ENCODE measurements at regions of chr10 and their contacts with region 1.

Region 1: GRCh38 chr10:100229819-100230422 is 525 bp upstream of the CHUK start:
- DNase-seq: peak in 1 of 9 experiments; percentile 9
- ATAC-seq: no peak
- H3K4me3 ChIP-seq: peak overlapping the region; percentile 66 to 99
- H3K4me3 Mint-ChIP-seq: peak overlapping the region; percentile 93
- H3K27ac ChIP-seq: peak overlapping the region; percentile 83 to 89
- H3K27ac Mint-ChIP-seq: peak overlapping the region; percentile 95
- H3K4me1 ChIP-seq: peaks cover 21% of the 10 kb centered on the region
- H3K4me1 Mint-ChIP-seq: peaks cover 32% of the 10 kb centered on the region
- H3K27me3 ChIP-seq: no peaks in the 10 kb centered on the region
- H3K27me3 Mint-ChIP-seq: no peaks in the 10 kb centered on the region
- CTCF ChIP-seq: no peak

Region 2: GRCh38 chr10:100209303-100209702 is 20.6 kb before region 1 on chr10:
- CTCF ChIA-PET with region 1: no interaction called
- POLR2A ChIA-PET with region 1: no interaction called
- intact Hi-C with region 1: no loop called
- DNase-seq: no peak
- ATAC-seq: no peak
- H3K4me3 ChIP-seq: no peak overlapping the region
- H3K4me3 Mint-ChIP-seq: no peak overlapping the region
- H3K27ac ChIP-seq: no peak overlapping the region
- H3K27ac Mint-ChIP-seq: no peak overlapping the region
- H3K4me1 ChIP-seq: no peaks in the 10 kb centered on the region
- H3K4me1 Mint-ChIP-seq: no peaks in the 10 kb centered on the region
- H3K27me3 ChIP-seq: no peaks in the 10 kb centered on the region
- H3K27me3 Mint-ChIP-seq: no peaks in the 10 kb centered on the region
- CTCF ChIP-seq: no peak

Region 3: DNA sequence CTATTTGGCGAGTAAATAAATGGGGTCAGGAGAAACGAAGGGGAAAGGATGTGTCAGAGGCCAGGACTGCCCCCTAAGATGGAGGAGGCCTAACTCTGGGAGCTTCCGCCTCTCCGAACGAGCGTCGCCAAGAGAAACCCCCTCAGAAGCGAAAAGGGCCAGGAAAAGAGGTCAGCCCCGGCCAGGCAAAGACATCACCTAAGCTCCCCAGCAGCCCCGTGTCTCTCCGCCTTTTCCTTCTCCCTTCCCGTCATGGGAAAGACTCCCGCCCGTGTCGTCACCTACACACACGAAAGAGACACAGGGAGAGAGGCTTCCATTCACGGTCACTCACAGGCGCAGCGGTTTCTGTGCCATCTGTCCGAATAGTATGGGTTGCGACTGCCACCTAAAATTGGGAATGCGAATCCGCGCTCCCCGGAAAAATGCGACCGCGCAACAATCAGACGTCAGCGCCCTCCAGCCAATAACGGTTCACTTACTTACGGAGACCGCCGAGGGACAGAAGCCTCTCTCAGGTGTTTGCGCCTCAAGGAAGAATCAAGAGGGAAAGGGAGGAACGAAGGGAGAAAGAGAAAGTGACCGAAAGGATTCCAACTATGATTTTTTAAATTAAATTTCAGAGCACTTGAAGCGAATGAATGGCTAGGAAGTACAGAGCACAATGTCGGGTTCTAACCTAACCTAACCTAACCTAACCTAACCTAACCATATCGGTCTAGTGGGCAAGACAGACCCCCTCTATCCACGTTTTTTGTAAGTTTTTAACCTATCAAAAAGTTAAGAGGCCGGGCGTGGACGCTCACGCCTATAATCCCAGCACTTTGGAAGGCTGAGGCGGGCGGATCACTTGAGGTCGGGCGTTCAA is 37.5 kb after region 1 on chr10 and contains the start of gene CWF19L1:
- CTCF ChIA-PET with region 1: no interaction called
- POLR2A ChIA-PET with region 1: no interaction called
- intact Hi-C with region 1: loop called (anchors 1 to 5 kb)
- DNase-seq: peak; percentile 48 to 88 (median 76)
- ATAC-seq: peak; percentile 88
- H3K4me3 ChIP-seq: peak within 1 kb of the TSS; percentile 87 to 100
- H3K4me3 Mint-ChIP-seq: peak within 1 kb of the TSS; percentile 100
- H3K27ac ChIP-seq: peak within 1 kb of the TSS; percentile 81 to 95
- H3K27ac Mint-ChIP-seq: peak within 1 kb of the TSS; percentile 100
- H3K4me1 ChIP-seq: peaks cover 22% of the 10 kb centered on the region
- H3K4me1 Mint-ChIP-seq: peaks cover 33% of the 10 kb centered on the region
- H3K27me3 ChIP-seq: no peaks in the 10 kb centered on the region
- H3K27me3 Mint-ChIP-seq: no peaks in the 10 kb centered on the region
- CTCF ChIP-seq: no peak
- total RNA-seq, gene CWF19L1: 70.9 to 83.7 TPM

Region 4: GRCh38 chr10:100535715-100536353 is 305.9 kb after region 1 on chr10 and contains the start of gene HIF1AN:
- CTCF ChIA-PET with region 1: no interaction called
- POLR2A ChIA-PET with region 1: no interaction called
- intact Hi-C with region 1: loop called in 1 of 2 experiments (anchors 5 kb)
- DNase-seq: peak; percentile 73 to 97 (median 88)
- ATAC-seq: peak; percentile 99
- H3K4me3 ChIP-seq: peak within 1 kb of the TSS; percentile 59 to 82
- H3K4me3 Mint-ChIP-seq: no peak within 1 kb of the TSS
- H3K27ac ChIP-seq: peak within 1 kb of the TSS; percentile 55 to 75
- H3K27ac Mint-ChIP-seq: no peak within 1 kb of the TSS
- H3K4me1 ChIP-seq: peaks cover 29% of the 10 kb centered on the region
- H3K4me1 Mint-ChIP-seq: peaks cover 19% of the 10 kb centered on the region
- H3K27me3 ChIP-seq: no peaks in the 10 kb centered on the region
- H3K27me3 Mint-ChIP-seq: no peaks in the 10 kb centered on the region
- CTCF ChIP-seq: peak; percentile 92
- total RNA-seq, gene HIF1AN: 28.0 to 31.2 TPM